H1 (cell line): ENCODE measurements at regions of chr1 and their contacts with region 1.

Region 1: GRCh38 chr1:114610546-114611245 is 29.3 kb upstream of the BCAS2 start:
- DNase-seq: no peak
- H3K4me3 ChIP-seq: no peak overlapping the region
- H3K27ac ChIP-seq: no peak overlapping the region
- H3K4me1 ChIP-seq: no peaks in the 10 kb centered on the region
- H3K27me3 ChIP-seq: no peaks in the 10 kb centered on the region
- CTCF ChIP-seq: no peak
- EP300 ChIP-seq: no peak
- POLR2A ChIP-seq: no peak
- RAD21 ChIP-seq: no peak

Region 2: DNA sequence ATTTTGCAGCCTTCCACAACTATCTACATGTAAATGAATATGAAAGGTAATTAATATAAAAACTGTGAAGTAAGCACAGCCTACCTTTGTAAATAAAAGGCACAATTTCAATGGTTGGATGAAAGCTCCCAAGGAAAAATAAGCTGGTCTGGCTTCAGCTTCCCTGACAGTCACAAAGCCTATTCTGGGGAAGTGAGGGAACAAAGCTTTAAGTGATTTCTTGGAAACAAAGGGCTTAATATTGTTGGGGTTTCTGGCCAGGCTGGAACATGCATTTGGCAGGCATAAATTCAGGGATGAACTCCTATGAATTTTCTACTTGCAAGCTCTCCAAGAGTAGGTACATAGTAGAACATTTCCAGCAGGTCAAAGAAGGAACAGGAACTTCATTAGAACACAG is 46.6 kb before region 1 on chr1:
- CTCF ChIA-PET with region 1: no interaction called
- POLR2A ChIA-PET with region 1: no interaction called
- DNase-seq: no peak
- H3K4me3 ChIP-seq: no peak overlapping the region
- H3K27ac ChIP-seq: no peak overlapping the region
- H3K4me1 ChIP-seq: no peaks in the 10 kb centered on the region
- H3K27me3 ChIP-seq: no peaks in the 10 kb centered on the region
- CTCF ChIP-seq: no peak
- EP300 ChIP-seq: no peak
- POLR2A ChIP-seq: no peak
- RAD21 ChIP-seq: no peak

Region 3: DNA sequence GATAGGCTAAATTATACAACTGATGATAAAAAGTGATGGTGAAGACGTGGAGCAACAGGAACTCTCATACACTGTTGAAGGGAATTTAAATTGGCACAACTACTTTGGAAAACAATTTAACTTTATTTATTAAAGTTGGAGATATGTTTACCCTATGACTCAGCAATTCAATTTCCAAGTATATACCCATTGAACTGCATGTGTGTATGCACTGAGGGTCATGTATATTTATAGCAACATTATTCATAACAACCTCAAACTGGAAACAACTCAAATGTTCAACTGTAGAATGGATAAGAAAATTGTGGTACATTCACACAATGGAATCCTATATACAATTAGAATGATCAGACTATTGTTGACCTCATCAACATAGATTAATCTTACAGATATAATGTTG is 12.7 kb before region 1 on chr1:
- CTCF ChIA-PET with region 1: interaction called, 11 read pairs
- POLR2A ChIA-PET with region 1: no interaction called
- DNase-seq: no peak
- H3K4me3 ChIP-seq: no peak overlapping the region
- H3K27ac ChIP-seq: no peak overlapping the region
- H3K4me1 ChIP-seq: no peaks in the 10 kb centered on the region
- H3K27me3 ChIP-seq: no peaks in the 10 kb centered on the region
- CTCF ChIP-seq: no peak
- EP300 ChIP-seq: no peak
- POLR2A ChIP-seq: no peak
- RAD21 ChIP-seq: no peak